ENCODE measurements at regions of chr10 and their contacts with region 1.

Region 1: GRCh38 chr10:110600487-110601101 is 33.1 kb downstream of the SMC3 start:
- DNase-seq: peak; percentile 42
- H3K4me3 Mint-ChIP-seq: no peak overlapping the region
- H3K27ac Mint-ChIP-seq: no peak overlapping the region
- H3K4me1 Mint-ChIP-seq: no peaks in the 10 kb centered on the region
- H3K27me3 Mint-ChIP-seq: no peaks in the 10 kb centered on the region

Region 2: DNA sequence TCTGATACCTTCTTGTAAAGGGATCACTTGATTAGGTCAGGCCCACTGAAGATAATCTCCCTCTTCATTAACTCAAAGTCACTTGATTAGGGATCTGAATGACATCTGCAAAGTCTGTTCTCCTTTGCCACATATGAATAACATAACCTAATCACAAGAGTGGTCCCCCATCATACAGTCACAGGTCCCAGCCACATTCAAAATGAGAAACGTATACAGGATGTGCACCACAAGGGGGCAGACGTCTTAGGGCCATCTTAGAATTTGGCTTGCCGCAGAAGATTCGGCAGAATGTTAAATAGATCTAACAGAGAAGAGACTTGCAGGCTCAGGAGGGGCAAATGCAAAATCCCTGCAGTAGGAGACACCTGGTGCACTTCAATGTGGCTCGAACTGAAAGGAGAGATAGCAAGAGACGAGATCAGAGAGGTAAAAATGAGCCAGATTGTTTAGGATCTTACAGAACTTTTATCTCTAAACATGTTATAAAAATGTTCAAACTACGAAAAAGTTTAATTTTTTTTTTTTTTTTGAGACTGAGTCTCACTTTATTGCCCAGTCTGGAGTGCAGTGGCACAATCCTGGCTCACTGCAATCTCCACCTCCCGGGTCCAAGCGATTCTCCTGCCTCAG is 43.5 kb before region 1 on chr10:
- CTCF ChIA-PET with region 1: interaction called, 3 read pairs
- intact Hi-C with region 1: loop called (anchors 1 kb)
- DNase-seq: peak; percentile 88
- H3K4me3 Mint-ChIP-seq: no peak overlapping the region
- H3K27ac Mint-ChIP-seq: no peak overlapping the region
- H3K4me1 Mint-ChIP-seq: peaks cover 4% of the 10 kb centered on the region
- H3K27me3 Mint-ChIP-seq: peaks cover 5% of the 10 kb centered on the region

Region 3: DNA sequence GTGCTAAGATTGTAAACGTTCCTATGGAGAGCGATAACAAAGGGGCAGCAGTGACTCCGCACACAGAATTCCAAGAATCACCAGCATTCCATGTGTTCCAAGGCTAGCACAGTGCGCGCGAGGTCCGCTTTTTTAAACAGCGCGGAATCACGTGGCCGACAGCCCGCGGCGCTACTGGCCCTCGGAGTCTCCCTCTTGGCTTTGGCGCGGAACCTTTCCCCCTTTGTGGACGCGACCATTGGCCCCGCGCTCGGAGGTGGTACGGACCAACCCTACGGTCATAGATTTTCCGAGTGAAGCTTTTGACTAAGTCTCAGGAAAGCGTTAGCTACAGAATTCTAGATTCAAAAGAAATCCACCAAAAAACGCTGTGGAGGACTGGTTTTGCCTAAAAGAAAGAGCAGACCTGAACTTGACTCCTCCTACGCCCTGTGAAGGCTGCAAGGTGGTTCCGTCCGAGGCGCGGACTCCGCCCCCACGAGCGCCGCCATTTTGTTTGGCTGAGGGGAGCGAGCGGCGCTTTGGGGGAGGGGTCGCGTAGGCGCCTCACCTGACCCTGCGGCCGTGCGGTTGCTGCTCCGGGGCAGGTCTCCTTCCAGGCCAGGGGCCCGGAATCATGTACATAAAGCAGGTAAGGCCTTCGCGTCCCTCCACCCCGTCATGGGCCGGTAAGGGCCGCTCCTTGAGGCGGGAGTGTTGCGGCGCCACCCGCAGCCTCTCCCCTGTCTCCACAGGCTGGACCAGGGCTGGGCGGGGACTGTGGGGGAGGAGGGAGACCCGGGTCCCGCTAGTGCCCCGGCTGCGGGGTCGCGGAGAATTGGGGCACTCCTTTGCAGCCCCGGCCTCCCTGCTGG is 33.2 kb before region 1 on chr10 and contains the start of gene SMC3:
- CTCF ChIA-PET with region 1: interaction called, 6 read pairs
- intact Hi-C with region 1: loop called (anchors 2 kb)
- DNase-seq: peak; percentile 95
- H3K4me3 Mint-ChIP-seq: peak within 1 kb of the TSS; percentile 87
- H3K27ac Mint-ChIP-seq: peak within 1 kb of the TSS; percentile 98
- H3K4me1 Mint-ChIP-seq: peaks cover 31% of the 10 kb centered on the region
- H3K27me3 Mint-ChIP-seq: peaks cover 5% of the 10 kb centered on the region
- total RNA-seq, gene SMC3: 81.3 to 85.0 TPM

Region 4: DNA sequence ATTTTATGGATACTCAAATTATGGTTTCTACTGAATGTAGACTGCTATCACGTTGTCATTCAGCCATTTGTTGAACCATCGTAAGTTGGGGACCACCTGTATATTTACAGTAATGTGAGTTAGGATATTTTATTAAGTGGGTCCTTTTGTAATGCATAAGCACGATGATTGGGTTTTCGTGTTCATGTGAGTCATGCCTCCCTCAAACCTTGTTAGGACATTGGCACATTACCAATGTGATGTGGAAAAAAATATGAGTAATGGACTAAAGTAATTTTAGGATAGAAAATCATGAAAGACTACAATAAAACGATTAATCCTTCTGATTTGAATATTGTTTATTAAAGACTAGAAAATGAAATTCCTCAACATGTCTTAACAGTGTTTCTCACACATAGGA is 24.4 kb before region 1 on chr10:
- CTCF ChIA-PET with region 1: interaction called, 13 read pairs
- intact Hi-C with region 1: loop called (anchors 2 kb)
- DNase-seq: no peak
- H3K4me3 Mint-ChIP-seq: no peak overlapping the region
- H3K27ac Mint-ChIP-seq: peak overlapping the region; percentile 37
- H3K4me1 Mint-ChIP-seq: peaks cover 41% of the 10 kb centered on the region
- H3K27me3 Mint-ChIP-seq: no peaks in the 10 kb centered on the region

Region 5: GRCh38 chr10:110584006-110584405 is 16.6 kb before region 1 on chr10:
- CTCF ChIA-PET with region 1: interaction called, 13 read pairs
- intact Hi-C with region 1: no loop called
- DNase-seq: no peak
- H3K4me3 Mint-ChIP-seq: no peak overlapping the region
- H3K27ac Mint-ChIP-seq: peak overlapping the region; percentile 5
- H3K4me1 Mint-ChIP-seq: peaks cover 2% of the 10 kb centered on the region
- H3K27me3 Mint-ChIP-seq: no peaks in the 10 kb centered on the region

Region 6: DNA sequence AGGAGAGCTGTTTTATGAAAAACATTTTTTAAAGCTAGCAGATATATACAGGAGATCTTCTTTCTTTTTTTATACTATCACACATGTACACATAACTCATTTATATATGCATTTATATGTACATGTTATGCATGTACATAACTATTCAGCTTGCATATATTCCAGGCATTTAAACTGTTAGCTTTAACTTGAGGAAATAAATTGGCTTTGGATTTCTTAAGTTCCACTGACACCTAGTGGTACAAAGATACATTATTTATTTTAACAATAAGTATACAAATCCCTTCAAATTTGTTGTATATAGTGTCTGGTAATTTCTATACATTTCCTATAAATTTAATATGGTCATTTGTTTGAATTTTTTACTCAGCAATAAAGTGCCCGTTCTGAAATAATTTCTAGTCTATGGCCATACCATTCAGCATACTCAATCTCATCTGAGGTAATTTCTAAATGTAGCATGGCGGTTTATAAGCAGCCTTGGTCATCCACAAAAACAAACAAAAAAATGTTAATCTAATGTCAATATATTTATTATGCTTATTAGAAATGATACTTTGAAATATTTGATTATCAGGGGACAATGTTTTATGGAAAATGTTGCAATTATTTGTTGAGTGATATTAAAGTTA is 1834.5 kb after region 1 on chr10:
- CTCF ChIA-PET with region 1: no interaction called
- intact Hi-C with region 1: loop called (anchors 10 kb)
- DNase-seq: no peak
- H3K4me3 Mint-ChIP-seq: no peak overlapping the region
- H3K27ac Mint-ChIP-seq: no peak overlapping the region
- H3K4me1 Mint-ChIP-seq: peaks cover 2% of the 10 kb centered on the region
- H3K27me3 Mint-ChIP-seq: no peaks in the 10 kb centered on the region

Measured in activated naive CD4-positive, alpha-beta T cell treated with anti-CD3 and anti-CD28 coated beads for 36 hours (primary cell).